Activated B cell treated with CpG ODN at 0.5 μM for 24 hours (primary cell): ENCODE measurements at regions of chr5 and their contacts with region 1.

Region 1: DNA sequence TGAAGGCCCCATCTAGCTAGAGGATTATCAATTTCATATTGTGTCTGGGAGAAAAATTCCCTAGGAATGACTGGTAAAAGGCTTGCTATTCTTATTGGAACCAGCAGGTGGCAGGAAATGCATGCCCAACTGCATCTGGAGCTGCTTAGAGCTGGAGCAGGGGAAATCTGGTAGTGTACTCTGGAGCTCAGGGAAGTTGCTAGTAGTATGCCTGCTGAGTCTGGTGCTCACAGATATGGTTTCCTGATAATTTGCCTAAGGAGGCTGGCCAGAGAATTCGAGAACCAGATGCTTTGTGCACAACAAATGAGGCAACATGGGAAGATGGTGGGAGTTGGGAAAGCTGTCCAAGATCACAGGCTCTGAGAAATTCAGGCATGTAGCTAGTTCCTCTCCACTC is 53.7 kb downstream of the G3BP1 start:
- DNase-seq: no peak
- ATAC-seq: no peak
- H3K4me3 Mint-ChIP-seq: no peak overlapping the region
- H3K27ac Mint-ChIP-seq: no peak overlapping the region
- H3K4me1 Mint-ChIP-seq: no peaks in the 10 kb centered on the region
- H3K27me3 Mint-ChIP-seq: no peaks in the 10 kb centered on the region
- CTCF ChIP-seq: no peak

Region 2: DNA sequence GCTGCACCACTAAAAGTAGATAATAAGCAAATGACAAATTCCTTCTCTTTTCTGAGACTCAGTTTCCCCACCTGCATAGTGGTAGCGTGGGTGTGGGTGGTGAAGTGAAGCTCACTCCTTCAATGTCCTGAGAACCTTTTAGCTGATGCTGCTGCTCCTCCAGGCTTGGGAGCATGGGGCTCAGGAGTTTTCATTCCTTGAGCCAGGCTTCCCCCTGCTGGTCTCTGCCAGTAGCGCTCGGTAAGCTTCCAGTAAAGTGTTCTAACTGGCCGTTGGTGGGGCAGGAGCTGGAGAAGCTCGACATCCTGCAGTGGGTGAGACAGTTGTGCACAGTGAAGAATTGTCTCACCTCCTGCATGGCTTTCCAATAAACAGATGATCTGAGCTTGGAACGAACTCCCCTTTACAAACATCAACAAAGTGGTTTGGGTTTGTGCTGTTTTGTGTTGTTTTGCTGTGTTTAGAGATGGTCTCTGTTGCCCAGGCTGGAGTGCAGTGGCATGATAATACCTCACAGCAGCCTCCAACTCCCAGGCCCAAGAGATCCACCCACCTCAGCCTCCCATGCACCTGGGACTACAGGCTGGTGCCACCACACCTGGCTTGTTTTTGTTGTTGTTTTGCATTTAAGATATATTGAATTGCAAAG is 173.3 kb before region 1 on chr5:
- CTCF ChIA-PET with region 1: no interaction called
- POLR2A ChIA-PET with region 1: no interaction called
- intact Hi-C with region 1: no loop called
- DNase-seq: peak; percentile 49
- ATAC-seq: peak; percentile 96
- H3K4me3 Mint-ChIP-seq: no peak overlapping the region
- H3K27ac Mint-ChIP-seq: no peak overlapping the region
- H3K4me1 Mint-ChIP-seq: no peaks in the 10 kb centered on the region
- H3K27me3 Mint-ChIP-seq: peaks cover 8% of the 10 kb centered on the region
- CTCF ChIP-seq: peak; percentile 36

Region 3: GRCh38 chr5:152142840-152143469 is 317.5 kb after region 1 on chr5:
- CTCF ChIA-PET with region 1: interaction called, 126 read pairs
- POLR2A ChIA-PET with region 1: interaction called, 3 read pairs
- intact Hi-C with region 1: loop called (anchors 1 kb)
- DNase-seq: peak; percentile 36
- ATAC-seq: peak; percentile 47
- H3K4me3 Mint-ChIP-seq: no peak overlapping the region
- H3K27ac Mint-ChIP-seq: no peak overlapping the region
- H3K4me1 Mint-ChIP-seq: no peaks in the 10 kb centered on the region
- H3K27me3 Mint-ChIP-seq: peaks cover 2% of the 10 kb centered on the region
- CTCF ChIP-seq: peak; percentile 81

Region 4: GRCh38 chr5:152271420-152271819 is 446.0 kb after region 1 on chr5:
- CTCF ChIA-PET with region 1: no interaction called
- POLR2A ChIA-PET with region 1: no interaction called
- intact Hi-C with region 1: loop called (anchors 10 kb)
- DNase-seq: no peak
- ATAC-seq: no peak
- H3K4me3 Mint-ChIP-seq: no peak overlapping the region
- H3K27ac Mint-ChIP-seq: no peak overlapping the region
- H3K4me1 Mint-ChIP-seq: no peaks in the 10 kb centered on the region
- H3K27me3 Mint-ChIP-seq: peaks cover 6% of the 10 kb centered on the region
- CTCF ChIP-seq: no peak

Region 5: GRCh38 chr5:152349683-152350526 is 524.5 kb after region 1 on chr5:
- CTCF ChIA-PET with region 1: interaction called, 10 read pairs
- POLR2A ChIA-PET with region 1: no interaction called
- intact Hi-C with region 1: loop called (anchors 5 kb)
- DNase-seq: no peak
- ATAC-seq: no peak
- H3K4me3 Mint-ChIP-seq: no peak overlapping the region
- H3K27ac Mint-ChIP-seq: no peak overlapping the region
- H3K4me1 Mint-ChIP-seq: no peaks in the 10 kb centered on the region
- H3K27me3 Mint-ChIP-seq: no peaks in the 10 kb centered on the region
- CTCF ChIP-seq: no peak

Region 6: DNA sequence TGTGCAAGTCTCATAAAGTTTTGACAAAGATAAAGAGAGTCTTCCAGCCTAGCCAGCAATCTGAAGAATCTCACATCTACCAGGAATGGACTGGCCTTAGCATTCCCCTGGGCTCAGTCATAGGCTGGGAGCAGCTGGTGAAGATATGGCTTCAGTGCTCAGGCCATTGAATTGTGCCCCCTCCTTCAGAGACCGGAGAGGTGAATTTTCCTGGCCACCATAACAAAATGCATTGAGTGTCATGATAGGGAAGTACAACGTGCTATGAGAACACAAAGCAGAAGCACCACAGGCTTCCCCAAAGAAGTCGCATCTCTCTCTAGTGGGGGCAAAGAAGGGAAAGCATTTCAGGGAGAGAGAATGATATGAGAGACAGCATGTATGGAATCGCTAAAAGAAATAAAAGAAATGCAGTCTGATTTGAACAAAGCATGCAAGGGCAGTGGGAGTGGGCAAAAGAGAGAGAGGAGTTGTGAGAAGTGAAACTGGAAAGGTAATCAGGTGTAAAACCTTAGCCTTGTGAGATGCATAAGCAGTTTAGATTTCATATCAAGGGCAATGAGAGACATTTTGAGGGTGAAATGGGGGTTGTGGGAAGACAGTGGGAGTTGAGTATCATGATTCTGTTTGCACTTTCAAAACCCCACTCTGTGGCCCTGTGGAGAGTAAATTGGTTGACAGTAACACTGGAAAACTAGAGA is 636.7 kb after region 1 on chr5:
- CTCF ChIA-PET with region 1: interaction called, 4 read pairs
- POLR2A ChIA-PET with region 1: no interaction called
- intact Hi-C with region 1: loop called (anchors 5 kb)
- DNase-seq: no peak
- ATAC-seq: no peak
- H3K4me3 Mint-ChIP-seq: no peak overlapping the region
- H3K27ac Mint-ChIP-seq: no peak overlapping the region
- H3K4me1 Mint-ChIP-seq: no peaks in the 10 kb centered on the region
- H3K27me3 Mint-ChIP-seq: peaks cover 19% of the 10 kb centered on the region
- CTCF ChIP-seq: no peak